ENCODE measurements at regions of chr9 and their contacts with region 1.

Region 1: GRCh38 chr9:6353851-6354686 is 25.9 kb downstream of the TPD52L3 start:
- DNase-seq: no peak
- H3K4me3 ChIP-seq: no peak overlapping the region
- CTCF ChIP-seq: no peak
- POLR2A ChIP-seq: no peak

Region 2: GRCh38 chr9:6566409-6567139 is 212.5 kb after region 1 on chr9:
- intact Hi-C with region 1: loop called (anchors 10 kb)
- DNase-seq: no peak
- H3K4me3 ChIP-seq: no peak overlapping the region
- CTCF ChIP-seq: no peak
- POLR2A ChIP-seq: no peak

Region 3: DNA sequence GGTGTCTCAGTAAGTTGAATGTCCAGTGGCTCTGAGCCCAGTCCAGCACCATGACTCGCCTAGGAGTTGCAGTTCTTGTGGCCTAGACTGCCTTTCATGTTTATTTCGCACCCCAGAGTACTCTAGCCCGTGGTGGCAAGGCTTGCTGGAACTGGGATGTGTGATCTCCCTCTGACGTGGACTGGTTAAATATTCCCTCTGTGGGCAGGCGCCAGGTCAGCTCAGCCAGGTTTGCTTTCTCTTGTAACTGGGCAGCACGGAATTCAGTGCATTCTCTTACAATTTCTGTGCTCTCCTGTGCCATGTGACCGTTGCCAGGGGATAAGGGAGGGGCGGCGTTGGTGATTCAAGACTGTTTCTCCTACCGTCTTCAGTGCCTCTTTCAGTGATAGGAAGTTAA is 674.5 kb after region 1 on chr9:
- intact Hi-C with region 1: no loop called
- DNase-seq: no peak
- H3K4me3 ChIP-seq: no peak overlapping the region
- CTCF ChIP-seq: no peak
- POLR2A ChIP-seq: no peak

Measured in lower leg skin (tissue), 4 donors.